ENCODE measurements at regions of chr1 and their contacts with region 1.

Region 1: DNA sequence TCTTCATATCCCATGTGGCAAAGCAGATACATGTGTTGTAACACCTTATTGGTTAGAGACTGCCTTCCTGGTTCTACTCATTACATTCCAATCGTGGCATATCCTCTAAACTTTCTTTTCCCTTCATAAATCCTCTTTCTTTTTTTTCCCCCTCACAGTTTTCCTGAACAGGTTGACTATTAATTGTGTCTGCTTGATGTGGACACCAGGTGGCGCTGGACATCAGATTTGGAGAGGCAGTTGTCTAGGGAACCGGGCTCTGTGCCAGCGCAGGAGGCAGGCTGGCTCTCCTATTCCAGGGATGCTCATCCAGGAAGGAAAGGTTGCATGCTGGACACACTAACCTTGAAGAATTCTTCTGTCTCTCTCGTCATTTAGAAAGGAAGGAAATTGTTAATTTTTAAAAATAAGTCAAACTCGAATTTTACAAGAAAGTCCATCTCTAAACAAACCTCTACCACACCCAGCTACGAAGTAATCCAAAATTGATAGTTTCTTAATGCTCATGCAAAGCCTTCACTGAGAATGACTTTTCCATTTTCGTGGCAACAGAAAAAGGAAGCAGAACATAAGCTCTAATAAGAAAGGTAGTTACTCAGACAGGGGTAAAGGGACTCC is 59.4 kb upstream of the ASB17 start:
- DNase-seq: peak; percentile 35
- ATAC-seq: peak; percentile 75
- H3K4me3 ChIP-seq: no peak overlapping the region
- H3K27ac ChIP-seq: no peak overlapping the region
- H3K4me1 ChIP-seq: no peaks in the 10 kb centered on the region
- H3K27me3 ChIP-seq: peaks cover 10% of the 10 kb centered on the region
- CTCF ChIP-seq: peak; percentile 86

Region 2: GRCh38 chr1:75785983-75786853 is 205.4 kb before region 1 on chr1 and contains the start of gene RABGGTB:
- CTCF ChIA-PET with region 1: no interaction called
- POLR2A ChIA-PET with region 1: no interaction called
- in situ Hi-C with region 1: no loop called
- intact Hi-C with region 1: no loop called
- DNase-seq: peak; percentile 95
- ATAC-seq: peak; percentile 97
- H3K4me3 ChIP-seq: peak within 1 kb of the TSS; percentile 81 to 99
- H3K27ac ChIP-seq: peak within 1 kb of the TSS; percentile 100
- H3K4me1 ChIP-seq: peaks cover 33% of the 10 kb centered on the region
- H3K27me3 ChIP-seq: no peaks in the 10 kb centered on the region
- CTCF ChIP-seq: no peak
- total RNA-seq, gene RABGGTB: 77.9 TPM

Region 3: DNA sequence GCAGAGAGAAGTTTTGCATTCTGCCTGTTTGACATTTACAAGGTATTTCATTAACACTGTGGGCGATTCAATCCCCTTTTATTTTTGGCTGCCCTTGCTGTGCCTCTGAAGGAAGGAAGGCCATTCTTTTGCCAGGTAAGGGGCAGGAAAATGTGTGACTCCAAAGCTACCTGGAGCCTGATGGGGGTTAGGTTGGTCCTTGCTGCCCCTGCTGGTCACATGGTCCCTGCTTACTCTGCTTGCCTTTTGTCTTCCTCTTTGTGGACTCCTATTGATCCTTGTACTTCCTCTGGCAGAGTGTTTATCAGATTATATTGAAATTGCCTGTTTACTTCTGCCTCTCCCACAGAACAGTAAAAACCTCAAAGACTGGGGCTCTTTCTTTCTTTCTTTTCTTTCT is 148.6 kb after region 1 on chr1:
- CTCF ChIA-PET with region 1: no interaction called
- POLR2A ChIA-PET with region 1: no interaction called
- in situ Hi-C with region 1: no loop called
- intact Hi-C with region 1: loop called (anchors 10 kb)
- DNase-seq: no peak
- ATAC-seq: no peak
- H3K4me3 ChIP-seq: no peak overlapping the region
- H3K27ac ChIP-seq: no peak overlapping the region
- H3K4me1 ChIP-seq: no peaks in the 10 kb centered on the region
- H3K27me3 ChIP-seq: no peaks in the 10 kb centered on the region
- CTCF ChIP-seq: 0 out of 2 replicates have a peak, but pooled peaks have one; percentile 13

Measured in Panc1 (cell line).